IMR-90 (cell line): ENCODE measurements at regions of chr14 and their contacts with region 1.

Region 1: DNA sequence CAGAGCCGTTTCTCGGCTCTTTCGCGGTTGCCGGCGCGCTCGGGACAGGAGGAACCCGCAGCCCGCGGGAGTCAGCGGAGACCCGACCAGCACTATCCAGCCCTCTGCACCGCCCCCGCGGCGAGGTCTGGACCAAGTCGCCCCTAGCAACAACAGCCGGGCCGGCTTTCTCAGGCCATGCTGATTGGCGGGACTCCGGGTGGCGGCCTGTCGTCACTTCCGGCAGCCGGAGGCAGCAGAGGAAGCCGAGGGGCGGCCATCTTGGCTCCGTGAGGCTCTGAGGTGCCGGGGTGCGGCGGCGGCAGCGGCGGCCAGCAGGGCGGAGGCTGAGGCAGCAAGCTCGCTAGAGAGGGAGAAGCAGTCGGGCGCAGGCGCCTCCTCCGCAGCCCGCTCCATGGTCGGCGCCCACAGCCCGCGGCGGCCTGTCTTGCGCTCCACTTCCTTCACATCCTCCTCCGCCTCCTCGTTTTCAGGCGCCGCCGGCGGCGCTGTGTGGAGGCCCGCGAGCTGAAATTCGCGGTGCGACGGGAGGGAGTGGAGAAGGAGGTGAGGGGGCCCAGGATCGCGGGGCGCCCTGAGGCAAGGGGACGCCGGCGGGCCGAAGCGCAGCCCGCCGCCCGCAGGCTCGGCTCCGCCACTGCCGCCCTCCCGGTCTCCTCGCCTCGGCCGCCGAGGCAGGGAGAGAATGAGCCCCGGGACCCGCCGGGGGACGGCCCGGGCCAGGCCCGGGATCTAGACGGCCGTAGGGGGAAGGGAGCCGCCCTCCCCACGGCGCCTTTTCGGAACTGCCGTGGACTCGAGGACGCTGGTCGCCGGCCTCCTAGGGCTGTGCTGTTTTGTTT is at the start of gene MARK3:
- DNase-seq: peak; percentile 95
- ATAC-seq: peak; percentile 95
- H3K4me3 ChIP-seq: peak within 1 kb of the TSS; percentile 100
- H3K27ac ChIP-seq: peak within 1 kb of the TSS; percentile 93
- H3K4me1 ChIP-seq: peaks cover 12% of the 10 kb centered on the region
- H3K27me3 ChIP-seq: no peaks in the 10 kb centered on the region
- CTCF ChIP-seq: peak; percentile 24; the same call in 1 of the 2 replicates
- POLR2A ChIP-seq: peak; percentile 79
- RAD21 ChIP-seq: no peak
- total RNA-seq, gene MARK3: 80.5 and 88.0 TPM in 2 replicates

Region 2: GRCh38 chr14:102548616-102549240 is 836.6 kb before region 1 on chr14:
- CTCF ChIA-PET with region 1: no interaction called
- POLR2A ChIA-PET with region 1: interaction called, 14 read pairs
- dilution Hi-C with region 1: no loop called
- in situ Hi-C with region 1: no loop called
- intact Hi-C with region 1: no loop called
- DNase-seq: no peak
- ATAC-seq: peak; percentile 25; the same call in 1 of the 2 replicates
- H3K4me3 ChIP-seq: no peak overlapping the region
- H3K27ac ChIP-seq: no peak overlapping the region
- H3K4me1 ChIP-seq: peaks cover 6% of the 10 kb centered on the region; the same call in 1 of the 2 replicates
- H3K27me3 ChIP-seq: peaks cover 16% of the 10 kb centered on the region
- CTCF ChIP-seq: no peak
- POLR2A ChIP-seq: no peak
- RAD21 ChIP-seq: no peak

Region 3: DNA sequence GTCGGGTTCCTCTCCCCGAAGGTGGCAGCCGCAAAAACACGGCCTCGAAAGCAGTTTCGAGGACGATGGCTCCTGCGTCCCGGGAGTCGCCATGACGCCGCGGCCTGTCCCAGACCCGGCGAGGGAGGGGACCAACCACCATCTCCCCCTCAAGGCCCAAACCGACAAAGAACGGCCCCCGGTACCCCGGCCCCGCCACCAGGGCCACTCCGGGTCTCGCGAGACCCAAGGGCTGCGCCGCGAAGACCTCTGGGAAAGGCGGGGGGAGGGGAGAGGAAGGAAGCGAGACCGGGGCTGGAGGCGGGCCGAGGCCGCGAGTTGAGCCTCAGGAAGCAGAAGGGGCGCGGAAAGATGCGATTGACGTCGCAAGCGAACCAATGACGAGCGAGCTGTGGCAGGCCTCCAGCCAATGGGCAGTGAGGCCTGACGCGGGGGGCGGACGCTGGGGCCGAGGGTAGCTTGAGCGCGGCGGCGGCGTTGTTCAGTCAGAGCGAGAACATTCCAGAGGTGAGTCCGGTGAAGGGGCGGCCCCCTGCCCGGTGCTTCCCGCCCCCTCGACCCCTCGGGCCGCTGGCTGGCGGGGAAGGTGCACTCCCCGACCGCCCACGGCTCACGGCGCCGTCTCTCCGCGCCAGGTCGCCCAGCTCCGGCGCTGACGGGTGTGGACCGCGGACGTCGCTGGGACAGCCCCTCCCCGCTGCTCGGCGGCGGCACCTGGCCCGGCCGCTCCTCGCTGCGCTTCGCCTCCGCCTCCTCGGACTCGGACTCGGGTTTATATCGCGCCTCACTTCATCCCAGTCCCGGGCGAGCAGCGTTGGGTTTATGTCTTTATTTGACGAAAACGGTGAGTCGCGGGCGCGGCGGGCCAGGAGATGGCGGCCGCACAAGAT is 51.4 kb before region 1 on chr14 and contains the start of gene EIF5:
- CTCF ChIA-PET with region 1: interaction called, 3 read pairs
- POLR2A ChIA-PET with region 1: interaction called, 4 read pairs
- dilution Hi-C with region 1: no loop called
- in situ Hi-C with region 1: no loop called
- intact Hi-C with region 1: loop called (anchors 1 kb)
- DNase-seq: peak; percentile 98
- ATAC-seq: peak; percentile 89
- H3K4me3 ChIP-seq: peak within 1 kb of the TSS; percentile 83
- H3K27ac ChIP-seq: peak within 1 kb of the TSS; percentile 97
- H3K4me1 ChIP-seq: peaks cover 3% of the 10 kb centered on the region
- H3K27me3 ChIP-seq: no peaks in the 10 kb centered on the region
- CTCF ChIP-seq: peak; percentile 8; the same call in 1 of the 2 replicates
- POLR2A ChIP-seq: peak; percentile 99
- RAD21 ChIP-seq: no peak
- total RNA-seq, gene EIF5: 163 and 241 TPM in 2 replicates

Region 4: GRCh38 chr14:103372603-103373304 is 12.6 kb before region 1 on chr14:
- CTCF ChIA-PET with region 1: no interaction called
- POLR2A ChIA-PET with region 1: no interaction called
- dilution Hi-C with region 1: no loop called
- in situ Hi-C with region 1: no loop called
- intact Hi-C with region 1: no loop called
- DNase-seq: peak; percentile 97
- ATAC-seq: peak; percentile 99
- H3K4me3 ChIP-seq: no peak overlapping the region
- H3K27ac ChIP-seq: peak overlapping the region; percentile 37
- H3K4me1 ChIP-seq: peaks cover 8% of the 10 kb centered on the region; the same call in 1 of the 2 replicates
- H3K27me3 ChIP-seq: no peaks in the 10 kb centered on the region
- CTCF ChIP-seq: no peak
- POLR2A ChIP-seq: no peak
- RAD21 ChIP-seq: 0 out of 2 replicates have a peak, but pooled peaks have one; percentile 9

Region 5: DNA sequence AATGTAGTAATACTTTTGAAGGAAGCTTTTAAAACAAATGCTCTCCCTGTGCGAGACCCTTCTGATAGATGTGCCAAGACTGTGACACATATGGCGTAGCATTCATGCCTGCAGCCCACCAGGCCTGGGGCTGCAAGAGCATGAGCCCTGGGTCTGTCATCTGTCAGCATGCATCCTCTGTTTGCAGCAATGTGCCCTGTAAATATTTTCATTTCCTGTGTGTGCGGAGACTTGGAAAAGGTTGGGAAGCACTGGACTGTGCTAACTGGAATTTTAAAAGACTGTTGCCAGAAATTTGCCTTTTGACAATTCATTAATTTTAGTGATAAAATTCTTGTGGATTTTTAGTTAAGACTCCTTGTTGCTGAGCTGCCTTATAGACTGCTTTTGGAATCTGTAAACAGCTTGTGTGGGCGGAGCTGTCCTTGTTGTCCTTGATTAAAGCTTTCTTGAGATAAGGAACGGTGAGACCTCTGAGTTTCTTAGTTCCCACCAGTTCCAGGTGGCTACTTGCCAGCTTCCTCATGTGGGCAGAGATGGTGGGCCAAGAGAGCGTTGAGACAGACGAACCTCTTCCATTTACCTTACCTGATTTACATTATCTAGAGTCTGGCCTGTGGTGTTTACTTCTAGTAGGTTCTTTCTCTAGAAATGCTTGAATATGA is 23.2 kb after region 1 on chr14:
- CTCF ChIA-PET with region 1: no interaction called
- POLR2A ChIA-PET with region 1: no interaction called
- dilution Hi-C with region 1: no loop called
- in situ Hi-C with region 1: no loop called
- intact Hi-C with region 1: no loop called
- DNase-seq: peak; percentile 13
- ATAC-seq: no peak; the same call in 1 of the 2 replicates
- H3K4me3 ChIP-seq: no peak overlapping the region
- H3K27ac ChIP-seq: no peak overlapping the region
- H3K4me1 ChIP-seq: peaks cover 6% of the 10 kb centered on the region
- H3K27me3 ChIP-seq: no peaks in the 10 kb centered on the region
- CTCF ChIP-seq: no peak
- POLR2A ChIP-seq: no peak
- RAD21 ChIP-seq: no peak

Region 6: GRCh38 chr14:103724116-103724515 is 338.7 kb after region 1 on chr14:
- CTCF ChIA-PET with region 1: no interaction called
- POLR2A ChIA-PET with region 1: no interaction called
- dilution Hi-C with region 1: no loop called
- in situ Hi-C with region 1: no loop called
- intact Hi-C with region 1: no loop called
- DNase-seq: peak; percentile 36
- ATAC-seq: 0 out of 2 replicates have a peak, but pooled peaks have one; percentile 21
- H3K4me3 ChIP-seq: no peak overlapping the region
- H3K27ac ChIP-seq: no peak overlapping the region
- H3K4me1 ChIP-seq: no peaks in the 10 kb centered on the region
- H3K27me3 ChIP-seq: no peaks in the 10 kb centered on the region
- CTCF ChIP-seq: no peak
- POLR2A ChIP-seq: no peak
- RAD21 ChIP-seq: no peak